Activated naive CD4-positive, alpha-beta T cell treated with anti-CD3 and anti-CD28 coated beads for 36 hours (primary cell): ENCODE measurements at regions of chr12 and their contacts with region 1.

Region 1: DNA sequence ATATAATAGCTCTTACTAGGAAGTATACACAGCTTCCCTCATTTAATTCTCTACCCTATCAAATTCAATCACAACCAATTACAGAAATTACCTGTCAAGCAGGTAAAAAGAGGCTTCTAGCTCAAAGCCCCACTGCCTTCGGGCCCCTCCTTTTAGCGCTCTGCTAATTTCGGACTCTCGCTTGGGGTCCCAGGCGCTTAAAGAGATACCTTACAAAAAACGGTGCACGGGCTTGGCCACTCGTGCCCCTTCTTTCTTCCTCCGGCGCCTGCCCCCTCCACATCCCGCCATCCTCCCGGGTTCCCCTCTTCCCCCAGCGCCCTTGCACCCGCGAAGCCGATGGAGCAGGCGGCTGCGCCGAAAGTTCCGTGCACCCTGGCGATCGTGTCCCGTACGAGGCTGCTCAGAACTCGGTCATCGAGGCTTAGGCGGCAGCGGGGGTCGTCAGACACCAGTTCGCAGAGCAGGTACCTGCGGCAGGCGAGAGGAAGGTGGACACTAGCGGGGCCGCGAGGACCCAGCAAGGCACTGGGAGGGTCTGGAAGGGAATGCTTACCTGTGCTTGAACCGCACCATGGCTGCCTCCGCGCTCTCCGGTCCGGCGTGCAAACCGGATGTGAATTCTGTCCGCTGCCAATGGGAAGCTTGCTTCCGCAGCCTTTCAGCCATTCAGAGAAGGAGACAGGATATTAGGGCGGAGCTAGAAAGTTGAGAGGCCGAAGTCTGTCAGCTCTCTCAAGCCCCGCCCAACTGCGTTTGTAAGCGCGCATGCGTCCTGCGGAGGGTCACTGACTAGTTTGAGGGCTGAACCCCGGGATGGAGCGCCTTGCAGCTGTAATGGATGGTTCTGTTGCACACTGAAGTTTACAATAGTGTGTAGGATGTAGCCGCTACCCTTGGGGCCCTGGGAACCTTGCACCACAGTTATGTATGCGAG is at the start of gene POP5:
- DNase-seq: peak; percentile 97
- H3K4me3 Mint-ChIP-seq: peak within 1 kb of the TSS; percentile 98
- H3K27ac Mint-ChIP-seq: peak within 1 kb of the TSS; percentile 89
- H3K4me1 Mint-ChIP-seq: peaks cover 41% of the 10 kb centered on the region
- H3K27me3 Mint-ChIP-seq: peaks cover 8% of the 10 kb centered on the region
- total RNA-seq, gene POP5: 44.2 to 45.0 TPM

Region 2: GRCh38 chr12:120327593-120327992 is 253.5 kb before region 1 on chr12 and contains the start of gene PLA2G1B:
- CTCF ChIA-PET with region 1: interaction called, 3 read pairs
- intact Hi-C with region 1: loop called (anchors 2 kb)
- DNase-seq: no peak
- H3K4me3 Mint-ChIP-seq: no peak within 1 kb of the TSS
- H3K27ac Mint-ChIP-seq: no peak within 1 kb of the TSS
- H3K4me1 Mint-ChIP-seq: no peaks in the 10 kb centered on the region
- H3K27me3 Mint-ChIP-seq: peaks cover 3% of the 10 kb centered on the region
- total RNA-seq, gene PLA2G1B: not detected

Region 3: DNA sequence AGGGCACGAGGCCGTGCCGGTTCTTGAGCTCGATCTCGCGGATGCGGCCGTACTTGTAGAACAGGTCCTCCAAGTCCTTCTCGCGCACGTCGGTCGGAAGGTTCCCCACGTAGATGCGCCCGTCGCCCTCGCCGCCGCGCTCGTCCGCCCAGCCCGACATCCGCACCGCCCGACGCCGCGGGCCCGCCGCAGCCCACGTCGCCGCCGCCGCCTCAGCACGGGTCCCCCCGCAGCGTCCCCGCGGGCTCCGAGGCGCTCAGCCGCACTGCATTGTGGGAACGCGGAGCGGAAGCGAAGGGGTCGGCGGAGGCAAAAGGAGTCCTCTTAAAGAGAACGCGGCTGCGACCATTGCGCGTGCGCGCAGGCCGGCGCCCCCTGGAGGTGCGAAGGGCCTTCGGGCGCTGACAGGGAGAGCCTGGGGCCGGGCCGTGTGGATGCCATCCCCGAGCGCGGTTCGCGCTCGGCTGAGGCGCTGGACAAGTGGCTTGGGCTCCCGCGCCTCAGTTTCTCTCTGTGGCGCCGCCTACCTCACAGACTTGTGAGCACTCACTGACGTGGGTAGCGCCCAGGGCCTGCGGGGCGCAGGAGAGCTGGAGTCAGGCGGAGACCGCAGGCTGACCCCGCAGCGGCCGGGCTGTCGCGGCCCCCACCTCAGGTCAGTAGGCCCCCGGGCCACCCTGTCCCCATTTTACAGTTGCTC is 111.5 kb before region 1 on chr12 and contains the start of gene SRSF9:
- CTCF ChIA-PET with region 1: interaction called, 3 read pairs
- intact Hi-C with region 1: loop called (anchors 1 kb)
- DNase-seq: peak; percentile 96
- H3K4me3 Mint-ChIP-seq: peak within 1 kb of the TSS; percentile 90
- H3K27ac Mint-ChIP-seq: peak within 1 kb of the TSS; percentile 87
- H3K4me1 Mint-ChIP-seq: peaks cover 37% of the 10 kb centered on the region
- H3K27me3 Mint-ChIP-seq: no peaks in the 10 kb centered on the region
- total RNA-seq, gene SRSF9: 164 to 171 TPM

Region 4: DNA sequence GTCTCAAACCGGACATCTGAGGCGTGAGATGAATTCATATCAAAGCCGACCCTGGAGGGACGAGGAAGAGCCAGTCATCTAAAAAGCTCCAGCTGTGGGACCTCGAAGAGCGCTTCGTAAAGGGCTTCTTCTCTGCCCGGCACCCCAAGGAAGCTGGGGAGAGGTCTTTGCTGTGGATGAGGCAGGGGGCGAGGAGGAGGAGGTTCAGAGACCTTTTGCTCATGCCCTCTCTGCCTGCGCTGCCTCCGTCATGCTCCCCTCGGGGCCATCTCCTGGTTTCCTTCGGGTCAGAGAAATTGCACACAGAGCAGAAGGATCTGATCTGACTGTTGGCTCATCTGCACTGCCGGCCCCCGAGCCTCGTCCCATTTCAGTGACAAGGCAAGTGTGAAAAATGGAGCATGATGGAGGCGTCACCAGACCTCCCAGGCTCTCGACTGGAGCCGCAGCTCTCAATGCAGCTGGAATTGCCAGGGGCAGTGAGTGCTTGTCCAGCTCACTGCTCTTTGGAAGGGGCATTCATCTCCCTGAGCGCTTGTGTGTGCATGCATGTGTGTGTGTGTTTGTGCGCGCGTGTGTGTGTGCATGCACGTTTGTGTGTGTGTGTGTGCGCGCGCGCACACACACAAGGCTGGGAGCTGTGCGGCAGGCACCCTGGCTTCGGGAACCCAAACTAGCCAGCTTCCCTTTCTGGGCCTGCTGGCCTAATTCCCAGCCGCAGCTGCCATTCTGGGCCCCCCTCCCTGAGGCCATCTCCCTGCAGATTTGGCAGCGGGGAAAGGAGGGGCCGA is 68.6 kb after region 1 on chr12:
- CTCF ChIA-PET with region 1: interaction called, 129 read pairs
- intact Hi-C with region 1: loop called (anchors 1 kb)
- DNase-seq: no peak
- H3K4me3 Mint-ChIP-seq: peak overlapping the region; percentile 20
- H3K27ac Mint-ChIP-seq: no peak overlapping the region
- H3K4me1 Mint-ChIP-seq: peaks cover 12% of the 10 kb centered on the region
- H3K27me3 Mint-ChIP-seq: peaks cover 41% of the 10 kb centered on the region

Region 5: DNA sequence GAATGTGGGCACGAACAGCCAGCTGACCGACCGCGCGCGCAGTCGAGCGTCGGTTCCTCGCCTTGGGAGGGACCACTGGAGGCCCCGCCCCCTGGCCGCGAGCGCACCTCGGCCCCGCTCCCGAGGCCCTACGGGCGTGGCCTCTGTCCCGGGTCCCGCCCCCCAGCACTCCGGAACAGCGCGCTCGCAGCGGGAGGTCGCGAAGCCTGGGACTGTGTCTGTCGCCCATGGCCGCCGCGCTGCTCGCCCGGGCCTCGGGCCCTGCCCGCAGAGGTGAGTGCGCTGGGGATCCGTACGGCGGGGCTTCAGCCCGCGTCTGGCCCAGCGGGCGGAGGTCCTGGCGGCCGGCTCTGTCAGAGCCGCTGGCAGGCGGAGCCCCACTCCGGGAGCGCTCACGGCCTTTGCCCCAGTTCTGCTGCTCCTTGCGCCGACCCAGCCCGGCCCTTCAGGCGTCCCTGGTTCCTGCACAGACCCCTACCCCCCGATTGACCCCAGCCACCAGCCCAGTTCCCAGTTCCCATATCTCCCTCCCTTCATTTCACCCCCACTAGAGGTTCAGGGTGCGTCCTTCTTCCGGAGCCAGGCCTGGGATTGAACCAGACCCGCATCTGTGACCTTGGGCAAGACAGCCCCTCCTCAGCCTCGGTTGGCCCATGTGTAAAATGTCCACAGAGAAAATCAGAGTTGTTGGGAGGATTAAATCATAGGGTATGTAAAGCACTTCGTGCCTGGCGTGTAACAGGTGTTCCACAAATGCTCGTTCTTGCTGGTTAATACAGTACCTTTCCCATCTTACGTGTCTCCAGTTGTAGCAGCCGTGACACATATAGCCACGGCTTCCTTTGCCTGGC is 144.8 kb after region 1 on chr12 and contains the start of gene ACADS:
- CTCF ChIA-PET with region 1: interaction called, 8 read pairs
- intact Hi-C with region 1: loop called (anchors 5 kb)
- DNase-seq: peak; percentile 91
- H3K4me3 Mint-ChIP-seq: peak within 1 kb of the TSS; percentile 74
- H3K27ac Mint-ChIP-seq: no peak within 1 kb of the TSS
- H3K4me1 Mint-ChIP-seq: peaks cover 14% of the 10 kb centered on the region
- H3K27me3 Mint-ChIP-seq: no peaks in the 10 kb centered on the region
- total RNA-seq, gene ACADS: 15.4 to 15.8 TPM

Region 6: DNA sequence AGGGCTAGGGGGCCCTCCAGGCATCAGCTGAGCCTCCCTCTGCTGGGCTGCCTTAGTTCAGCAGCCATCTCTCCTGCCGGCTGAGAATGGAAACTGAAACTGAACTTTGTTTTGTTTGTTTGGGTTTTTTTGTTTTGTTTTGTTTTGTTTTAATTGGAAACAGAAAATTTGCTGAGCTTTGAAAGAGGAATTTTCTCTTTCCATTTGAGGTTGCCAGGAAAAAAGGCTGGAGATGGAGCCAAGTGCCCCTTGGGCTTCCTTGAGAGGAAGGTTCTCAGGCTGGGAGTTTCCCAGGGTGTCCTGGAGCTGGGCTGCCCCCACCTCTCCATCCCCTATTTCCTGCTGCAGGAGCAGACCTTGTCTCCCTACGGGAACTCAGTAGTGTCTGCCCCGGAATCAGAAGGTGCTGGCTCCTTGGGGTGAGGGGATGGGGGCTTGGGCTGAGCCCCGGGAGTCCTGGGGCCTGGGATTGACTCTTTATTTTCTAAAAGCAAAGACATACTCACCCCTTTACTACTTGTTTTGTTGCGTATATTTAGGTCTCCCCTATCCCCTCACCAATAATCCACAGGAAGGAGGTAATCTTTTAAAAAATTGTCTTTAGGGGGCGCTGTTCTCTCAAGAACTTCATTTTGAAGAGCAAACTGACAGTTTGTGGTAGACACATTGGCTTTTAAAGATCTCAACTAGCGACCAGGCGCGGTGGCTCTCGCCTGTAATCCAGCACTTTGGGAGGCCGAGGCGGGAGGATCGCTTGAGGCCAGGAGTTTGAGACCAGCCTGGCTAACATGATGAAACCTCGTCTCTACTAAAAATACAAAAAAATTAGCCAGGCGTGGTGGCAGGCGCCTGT is 479.3 kb after region 1 on chr12:
- CTCF ChIA-PET with region 1: no interaction called
- intact Hi-C with region 1: loop called (anchors 5 kb)
- DNase-seq: peak; percentile 66
- H3K4me3 Mint-ChIP-seq: peak overlapping the region; percentile 64
- H3K27ac Mint-ChIP-seq: peak overlapping the region; percentile 63
- H3K4me1 Mint-ChIP-seq: peaks cover 16% of the 10 kb centered on the region
- H3K27me3 Mint-ChIP-seq: no peaks in the 10 kb centered on the region

Region 7: GRCh38 chr12:121209624-121210572 is 628.8 kb after region 1 on chr12 and contains the start of gene P2RX4:
- CTCF ChIA-PET with region 1: no interaction called
- intact Hi-C with region 1: loop called (anchors 10 kb)
- DNase-seq: peak; percentile 91
- H3K4me3 Mint-ChIP-seq: peak within 1 kb of the TSS; percentile 81
- H3K27ac Mint-ChIP-seq: peak within 1 kb of the TSS; percentile 89
- H3K4me1 Mint-ChIP-seq: peaks cover 23% of the 10 kb centered on the region
- H3K27me3 Mint-ChIP-seq: no peaks in the 10 kb centered on the region
- total RNA-seq, gene P2RX4: 14.2 to 18.0 TPM